IMR-90 (cell line): ENCODE measurements at regions of chr3 and their contacts with region 1.

Region 1: DNA sequence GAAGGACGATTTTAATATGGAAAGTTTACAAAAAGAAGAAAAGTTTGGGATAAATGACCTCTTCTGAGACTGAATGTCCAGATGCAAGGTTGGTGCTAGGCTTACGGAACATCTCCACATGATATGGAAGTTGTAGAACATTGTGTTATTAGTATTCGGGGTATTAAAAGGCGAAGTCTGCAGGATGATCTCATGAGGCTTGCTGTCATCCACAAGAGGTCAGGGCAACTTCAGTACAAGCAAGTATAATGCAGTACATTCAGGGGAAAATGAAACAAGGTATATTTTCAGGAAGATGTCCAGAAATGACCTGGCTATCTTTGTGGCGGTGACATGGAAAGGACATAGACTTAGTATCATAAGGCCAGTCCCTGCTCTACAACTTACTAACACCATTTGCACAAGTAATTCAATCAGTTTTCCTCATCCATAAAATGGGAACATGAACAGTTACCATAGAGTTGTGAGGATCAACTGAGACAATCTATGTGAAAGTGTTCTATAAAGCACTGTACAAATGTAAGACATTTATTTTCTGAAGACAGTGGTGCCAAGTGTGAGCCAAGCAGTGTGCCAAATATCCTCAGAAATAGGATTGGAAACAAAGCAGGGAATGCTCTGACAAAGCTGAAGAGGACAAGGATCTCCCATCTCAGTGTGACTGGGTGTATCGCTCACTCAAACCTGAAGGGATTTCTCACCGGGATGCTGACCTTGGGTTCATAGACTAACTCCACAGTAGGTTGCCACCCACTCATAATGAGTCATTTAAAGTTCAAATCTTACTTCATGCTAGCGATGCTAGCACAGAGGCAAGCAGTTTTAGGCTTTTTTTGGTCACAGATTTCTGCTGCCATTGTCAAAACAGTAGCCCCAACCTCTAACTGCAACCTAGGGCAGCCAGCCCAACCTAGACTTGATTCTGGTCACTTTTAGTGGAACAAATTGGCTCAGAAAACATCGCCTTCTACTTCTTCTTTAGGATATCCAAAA is 118.3 kb downstream of the TIGIT start:
- DNase-seq: peak; percentile 87
- ATAC-seq: peak; percentile 74
- H3K4me3 ChIP-seq: no peak overlapping the region
- H3K27ac ChIP-seq: 0 out of 2 replicates have a peak overlapping the region, but pooled peaks have one; percentile 32
- H3K4me1 ChIP-seq: peaks cover 16% of the 10 kb centered on the region
- H3K27me3 ChIP-seq: no peaks in the 10 kb centered on the region
- CTCF ChIP-seq: no peak
- POLR2A ChIP-seq: no peak
- RAD21 ChIP-seq: 0 out of 2 replicates have a peak, but pooled peaks have one; percentile 15

Region 2: DNA sequence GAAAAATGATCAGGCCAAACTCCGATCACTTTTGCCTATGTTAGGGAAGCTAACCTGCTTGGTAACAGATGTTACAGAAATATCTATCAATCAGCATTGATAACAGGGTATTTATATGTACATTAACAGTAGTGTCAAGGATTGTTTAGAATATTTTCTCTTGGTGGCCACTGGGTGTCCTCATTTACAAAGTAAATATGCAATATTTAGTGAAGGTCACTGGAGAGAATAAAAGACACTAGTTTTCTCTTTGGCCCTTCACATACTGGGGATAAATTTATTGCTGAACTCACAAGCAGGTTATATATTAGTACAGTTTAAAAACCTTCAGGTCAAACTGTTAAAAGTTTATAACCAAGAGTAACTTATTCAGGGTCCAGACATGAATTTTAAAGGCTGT is 49.3 kb before region 1 on chr3:
- CTCF ChIA-PET with region 1: interaction called, 3 read pairs
- POLR2A ChIA-PET with region 1: no interaction called
- dilution Hi-C with region 1: no loop called
- in situ Hi-C with region 1: no loop called
- intact Hi-C with region 1: loop called (anchors 5 kb)
- DNase-seq: peak; percentile 48
- ATAC-seq: peak; percentile 53
- H3K4me3 ChIP-seq: no peak overlapping the region
- H3K27ac ChIP-seq: no peak overlapping the region
- H3K4me1 ChIP-seq: 0 out of 2 replicates have a peak, but pooled peaks cover 1% of the 10 kb centered on the region
- H3K27me3 ChIP-seq: no peaks in the 10 kb centered on the region
- CTCF ChIP-seq: peak; percentile 52
- POLR2A ChIP-seq: no peak
- RAD21 ChIP-seq: peak; percentile 60